Activated B cell treated with CpG ODN at 0.5 μM for 24 hours (primary cell): ENCODE measurements at regions of chr3 and their contacts with region 1.

Region 1: GRCh38 chr3:152405915-152406802 is 137.4 kb downstream of the MBNL1 start:
- DNase-seq: no peak
- ATAC-seq: no peak
- H3K4me3 Mint-ChIP-seq: no peak overlapping the region
- H3K27ac Mint-ChIP-seq: peak overlapping the region; percentile 6
- H3K4me1 Mint-ChIP-seq: peaks cover 67% of the 10 kb centered on the region
- H3K27me3 Mint-ChIP-seq: no peaks in the 10 kb centered on the region
- CTCF ChIP-seq: no peak

Region 2: DNA sequence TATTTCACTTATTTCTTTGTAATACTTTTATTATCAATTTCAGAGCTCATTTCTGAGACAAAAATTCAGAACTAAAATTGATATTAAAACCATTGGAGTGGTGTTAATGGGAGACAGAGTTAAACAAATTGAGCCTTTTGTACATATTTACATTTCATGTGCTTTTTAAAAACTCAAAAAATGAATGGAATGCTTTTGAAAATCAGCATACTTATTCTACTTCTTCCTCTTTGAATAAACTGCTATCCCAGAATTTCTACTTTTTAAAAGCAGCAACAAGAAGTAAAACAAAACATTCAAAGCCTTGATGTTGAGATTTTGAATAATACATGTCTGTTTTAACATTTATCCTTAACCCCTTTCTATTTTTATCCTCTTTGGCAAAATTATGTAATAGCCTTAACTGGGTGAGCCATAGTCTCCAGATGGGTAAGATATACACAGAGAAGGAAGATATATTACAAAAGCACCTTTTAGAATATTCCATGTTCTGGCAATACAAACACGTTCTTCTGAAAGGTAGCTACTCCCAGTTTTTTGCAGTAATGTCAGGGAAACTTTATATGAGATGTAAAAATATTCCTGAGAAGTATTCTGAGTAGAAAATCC is 13.8 kb before region 1 on chr3:
- CTCF ChIA-PET with region 1: no interaction called
- POLR2A ChIA-PET with region 1: no interaction called
- intact Hi-C with region 1: loop called (anchors 1 kb)
- DNase-seq: no peak
- ATAC-seq: no peak
- H3K4me3 Mint-ChIP-seq: no peak overlapping the region
- H3K27ac Mint-ChIP-seq: no peak overlapping the region
- H3K4me1 Mint-ChIP-seq: peaks cover 50% of the 10 kb centered on the region
- H3K27me3 Mint-ChIP-seq: no peaks in the 10 kb centered on the region
- CTCF ChIP-seq: no peak

Region 3: GRCh38 chr3:152416808-152417580 is 10.8 kb after region 1 on chr3:
- CTCF ChIA-PET with region 1: no interaction called
- POLR2A ChIA-PET with region 1: no interaction called
- intact Hi-C with region 1: loop called (anchors 1 kb)
- DNase-seq: no peak
- ATAC-seq: no peak
- H3K4me3 Mint-ChIP-seq: no peak overlapping the region
- H3K27ac Mint-ChIP-seq: peak overlapping the region; percentile 21
- H3K4me1 Mint-ChIP-seq: peaks cover 41% of the 10 kb centered on the region
- H3K27me3 Mint-ChIP-seq: no peaks in the 10 kb centered on the region
- CTCF ChIP-seq: no peak

Region 4: DNA sequence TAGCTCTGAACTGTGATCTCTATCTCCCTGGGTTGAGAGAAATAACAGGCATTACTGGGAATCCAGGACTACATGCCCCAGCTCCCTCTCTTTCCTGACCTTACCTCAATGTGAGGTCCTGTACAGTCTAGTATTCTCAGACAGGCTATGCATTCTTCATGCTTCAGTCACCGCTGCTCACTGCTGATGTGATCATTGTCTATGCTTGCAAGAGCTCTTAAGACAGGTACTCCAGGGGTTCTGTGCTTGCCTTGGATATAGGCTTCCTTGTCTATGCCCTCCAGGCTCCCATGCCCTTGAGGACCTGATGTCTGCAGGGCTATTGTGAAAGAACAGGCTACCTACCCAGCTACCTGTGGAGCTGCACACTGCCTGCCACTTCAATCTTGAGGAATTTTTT is 46.2 kb after region 1 on chr3:
- CTCF ChIA-PET with region 1: no interaction called
- POLR2A ChIA-PET with region 1: no interaction called
- intact Hi-C with region 1: no loop called
- DNase-seq: no peak
- ATAC-seq: no peak
- H3K4me3 Mint-ChIP-seq: no peak overlapping the region
- H3K27ac Mint-ChIP-seq: peak overlapping the region; percentile 66
- H3K4me1 Mint-ChIP-seq: peaks cover 13% of the 10 kb centered on the region
- H3K27me3 Mint-ChIP-seq: no peaks in the 10 kb centered on the region
- CTCF ChIP-seq: no peak